Caco-2 (cell line): ENCODE measurements at regions of chr3 and their contacts with region 1.

Region 1: DNA sequence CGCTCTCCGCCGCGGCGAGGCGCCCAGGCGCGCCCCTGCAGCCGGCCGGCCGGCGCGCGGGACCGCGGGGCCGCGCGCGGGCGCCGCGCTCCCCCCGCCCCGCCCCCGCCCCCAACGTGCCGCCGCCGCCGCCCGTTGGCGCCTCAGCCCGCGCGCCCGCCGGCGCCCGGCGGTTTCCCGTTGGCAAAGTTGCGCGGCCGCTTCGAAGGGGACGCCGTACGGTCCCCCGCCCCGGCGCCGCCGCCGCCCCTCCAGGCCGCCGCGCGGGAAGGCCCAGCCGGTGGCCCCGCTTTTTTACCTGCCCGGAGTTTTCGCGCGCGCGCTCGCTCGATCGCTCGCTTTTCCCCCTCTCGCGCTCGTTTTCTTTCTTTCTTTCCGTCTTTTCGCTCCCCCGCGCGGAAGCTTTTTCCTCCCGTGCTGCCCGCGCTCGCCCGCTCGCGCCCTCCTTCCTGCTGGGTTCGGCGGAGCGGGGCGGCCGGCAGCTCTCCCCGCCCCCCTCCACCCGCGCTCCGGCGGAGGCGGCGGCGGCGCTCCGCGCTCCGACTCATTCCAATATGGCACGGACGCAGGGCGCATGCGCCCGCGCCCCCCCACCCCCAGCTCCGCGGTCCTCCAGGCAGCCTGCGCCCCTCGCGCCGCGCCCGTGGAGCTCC is at the start of gene SFMBT1:
- DNase-seq: peak; percentile 69 to 76
- H3K4me3 ChIP-seq: peak within 1 kb of the TSS; percentile 69
- H3K4me3 Mint-ChIP-seq: peak within 1 kb of the TSS; percentile 94
- H3K27ac Mint-ChIP-seq: peak within 1 kb of the TSS; percentile 91
- H3K4me1 ChIP-seq: peaks cover 29% of the 10 kb centered on the region
- H3K4me1 Mint-ChIP-seq: peaks cover 7% of the 10 kb centered on the region
- H3K27me3 ChIP-seq: no peaks in the 10 kb centered on the region
- H3K27me3 Mint-ChIP-seq: no peaks in the 10 kb centered on the region
- CTCF ChIP-seq: no peak
- total RNA-seq, gene SFMBT1: 45.3 and 47.4 TPM in 2 replicates

Region 2: DNA sequence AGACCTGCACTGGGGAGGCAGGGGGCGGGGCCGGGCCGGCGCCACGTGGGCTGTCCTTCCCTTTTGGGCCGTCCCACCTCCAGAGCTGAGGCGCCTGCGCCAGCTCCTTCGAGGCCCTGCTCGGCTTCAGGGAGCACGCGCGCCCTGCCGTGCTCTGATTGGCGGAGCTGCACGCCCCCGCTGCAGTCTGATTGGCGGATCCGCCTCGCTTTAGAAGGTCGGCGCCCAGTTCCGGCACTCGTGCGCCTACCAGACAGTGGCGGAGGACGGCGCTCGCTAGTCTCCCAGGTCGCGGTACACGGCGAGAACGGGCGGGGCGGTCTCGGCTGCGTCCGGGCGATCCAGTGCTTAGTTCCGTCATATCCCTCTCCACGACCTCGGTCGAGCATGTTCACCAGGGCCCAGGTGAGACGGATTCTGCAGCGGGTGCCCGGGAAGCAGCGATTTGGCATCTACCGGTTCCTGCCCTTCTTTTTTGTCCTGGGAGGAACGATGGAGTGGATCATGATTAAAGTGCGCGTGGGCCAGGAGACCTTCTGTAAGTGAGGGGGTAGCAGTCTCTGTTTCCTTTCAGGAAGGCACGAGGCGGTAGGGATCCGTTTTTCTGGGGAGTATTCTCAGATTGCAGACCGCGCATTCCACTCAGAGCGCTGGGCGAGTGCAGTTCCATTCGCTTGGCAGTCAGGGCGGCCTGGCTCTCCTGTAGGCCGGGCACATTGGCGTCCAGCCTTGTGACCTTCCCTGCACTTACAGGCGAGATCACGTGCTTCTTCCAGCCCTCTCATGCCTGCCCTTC is 509.1 kb before region 1 on chr3 and contains the start of gene UQCC5:
- CTCF ChIA-PET with region 1: no interaction called
- POLR2A ChIA-PET with region 1: interaction called, 5 read pairs
- intact Hi-C with region 1: loop called (anchors 10 kb)
- DNase-seq: peak; percentile 98
- H3K4me3 ChIP-seq: peak within 1 kb of the TSS; percentile 82
- H3K4me3 Mint-ChIP-seq: peak within 1 kb of the TSS; percentile 98
- H3K27ac Mint-ChIP-seq: peak within 1 kb of the TSS; percentile 97
- H3K4me1 ChIP-seq: peaks cover 28% of the 10 kb centered on the region; the same call in 1 of the 2 replicates
- H3K4me1 Mint-ChIP-seq: peaks cover 32% of the 10 kb centered on the region
- H3K27me3 ChIP-seq: no peaks in the 10 kb centered on the region
- H3K27me3 Mint-ChIP-seq: no peaks in the 10 kb centered on the region
- CTCF ChIP-seq: no peak
- total RNA-seq, gene UQCC5: 35.0 and 38.6 TPM in 2 replicates

Region 3: GRCh38 chr3:52649461-52650210 is 396.0 kb before region 1 on chr3:
- CTCF ChIA-PET with region 1: no interaction called
- POLR2A ChIA-PET with region 1: no interaction called
- intact Hi-C with region 1: no loop called
- DNase-seq: no peak
- H3K4me3 ChIP-seq: no peak overlapping the region
- H3K4me3 Mint-ChIP-seq: no peak overlapping the region
- H3K27ac Mint-ChIP-seq: no peak overlapping the region
- H3K4me1 ChIP-seq: no peaks in the 10 kb centered on the region
- H3K4me1 Mint-ChIP-seq: peaks cover 7% of the 10 kb centered on the region
- H3K27me3 ChIP-seq: no peaks in the 10 kb centered on the region
- H3K27me3 Mint-ChIP-seq: no peaks in the 10 kb centered on the region
- CTCF ChIP-seq: no peak

Region 4: DNA sequence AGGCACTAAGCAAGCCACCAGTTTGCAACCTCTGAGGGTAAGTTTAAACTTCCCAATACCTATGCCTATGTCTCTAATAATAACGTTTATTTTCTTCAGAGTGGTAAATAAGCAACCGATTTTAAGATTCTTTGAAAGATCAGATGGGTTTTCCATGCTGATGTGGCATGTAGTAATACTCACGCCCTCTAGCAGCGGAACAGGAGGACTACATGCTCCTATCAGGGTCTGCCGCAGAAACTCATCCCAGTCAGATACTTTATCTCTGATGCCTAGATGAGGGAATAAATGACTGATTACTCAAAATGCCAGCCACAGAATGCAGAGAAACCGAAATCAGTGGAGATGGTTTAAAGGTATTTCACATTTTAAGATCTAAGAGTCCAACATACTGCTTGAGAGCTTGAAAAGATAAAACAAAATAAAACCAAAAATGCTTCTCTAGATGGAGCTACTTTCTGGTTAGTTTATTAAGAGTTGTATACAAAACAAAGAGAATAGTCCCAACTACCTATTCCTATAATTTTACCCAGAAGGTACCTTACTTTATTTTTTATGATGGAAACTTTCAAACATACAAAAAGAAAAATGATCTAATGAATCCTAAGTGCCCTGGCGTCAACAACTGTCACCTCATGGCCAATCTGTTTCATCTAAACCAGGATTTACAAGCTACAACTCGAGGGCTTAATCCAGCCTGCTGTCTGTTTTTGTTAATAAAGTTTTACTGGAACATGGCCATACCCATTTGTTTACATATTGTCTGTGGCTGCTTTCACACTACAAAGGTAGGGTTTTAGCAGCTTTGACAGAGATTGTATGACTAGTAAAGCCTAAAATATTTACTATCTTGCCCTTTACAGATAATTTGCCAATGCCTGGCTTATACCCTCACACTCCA is 110.8 kb before region 1 on chr3:
- CTCF ChIA-PET with region 1: no interaction called
- POLR2A ChIA-PET with region 1: no interaction called
- intact Hi-C with region 1: loop called (anchors 5 kb)
- DNase-seq: peak; percentile 51 to 52
- H3K4me3 ChIP-seq: no peak overlapping the region
- H3K4me3 Mint-ChIP-seq: no peak overlapping the region
- H3K27ac Mint-ChIP-seq: no peak overlapping the region
- H3K4me1 ChIP-seq: no peaks in the 10 kb centered on the region
- H3K4me1 Mint-ChIP-seq: no peaks in the 10 kb centered on the region
- H3K27me3 ChIP-seq: no peaks in the 10 kb centered on the region
- H3K27me3 Mint-ChIP-seq: no peaks in the 10 kb centered on the region
- CTCF ChIP-seq: peak; percentile 69 to 87

Region 5: DNA sequence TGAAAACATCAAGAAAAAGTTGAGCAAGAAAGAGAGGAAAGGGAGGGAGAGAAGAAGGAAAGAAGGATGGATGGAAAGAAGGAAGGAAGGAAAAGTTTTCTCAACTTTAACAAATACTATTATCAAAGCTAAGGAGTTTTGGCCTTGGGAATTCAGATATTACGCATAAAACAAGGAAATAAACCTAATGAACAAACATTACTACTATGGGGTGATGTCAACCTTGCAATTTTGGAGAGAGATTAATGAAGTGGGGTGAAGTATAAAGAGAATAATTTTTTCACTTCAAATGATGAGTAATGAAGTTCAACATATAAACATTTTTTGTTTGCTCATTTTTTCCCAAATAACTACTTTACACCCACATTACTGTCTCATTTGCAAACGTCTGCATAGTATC is 55.0 kb before region 1 on chr3:
- CTCF ChIA-PET with region 1: no interaction called
- POLR2A ChIA-PET with region 1: no interaction called
- intact Hi-C with region 1: loop called (anchors 5 kb)
- DNase-seq: no peak
- H3K4me3 ChIP-seq: no peak overlapping the region
- H3K4me3 Mint-ChIP-seq: no peak overlapping the region
- H3K27ac Mint-ChIP-seq: no peak overlapping the region
- H3K4me1 ChIP-seq: no peaks in the 10 kb centered on the region
- H3K4me1 Mint-ChIP-seq: no peaks in the 10 kb centered on the region
- H3K27me3 ChIP-seq: no peaks in the 10 kb centered on the region
- H3K27me3 Mint-ChIP-seq: no peaks in the 10 kb centered on the region
- CTCF ChIP-seq: no peak

Region 6: DNA sequence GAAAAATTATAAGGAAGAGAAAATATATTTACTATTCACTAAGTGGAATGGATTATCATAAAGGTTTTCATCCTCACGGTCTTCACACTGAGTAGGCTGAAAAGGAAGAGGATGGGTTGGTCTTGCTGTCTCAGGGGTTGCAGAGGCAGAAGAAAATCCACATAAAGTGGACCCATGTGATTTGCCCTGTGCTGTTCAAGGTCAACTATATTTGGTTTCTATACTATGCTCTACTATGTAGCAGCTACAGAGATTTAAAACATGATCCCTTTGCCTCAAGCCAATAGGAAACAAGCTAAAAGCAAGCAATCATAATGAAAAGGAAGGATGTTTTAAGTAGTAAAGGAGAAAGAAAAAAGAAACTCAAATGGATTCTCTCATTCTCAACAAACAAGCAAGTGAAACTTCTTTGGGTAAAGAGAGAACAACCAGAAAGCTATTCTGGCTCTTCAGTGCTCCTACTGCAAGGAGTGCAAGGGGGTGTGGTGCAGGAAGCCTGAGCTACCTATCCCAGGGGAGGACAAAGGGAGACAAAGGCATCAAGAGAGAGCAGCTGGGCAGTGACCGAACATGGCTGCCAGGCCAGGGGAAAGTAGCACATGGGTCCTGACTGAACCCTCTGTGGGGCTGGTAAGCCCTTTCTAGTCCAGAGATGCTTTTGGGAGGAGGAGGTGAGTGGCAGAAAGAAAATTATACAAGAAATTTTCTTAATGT is 35.7 kb before region 1 on chr3:
- CTCF ChIA-PET with region 1: interaction called, 3 read pairs
- POLR2A ChIA-PET with region 1: interaction called, 6 read pairs
- intact Hi-C with region 1: loop called (anchors 5 kb)
- DNase-seq: no peak
- H3K4me3 ChIP-seq: no peak overlapping the region
- H3K4me3 Mint-ChIP-seq: no peak overlapping the region
- H3K27ac Mint-ChIP-seq: peak overlapping the region; percentile 7
- H3K4me1 ChIP-seq: peaks cover 13% of the 10 kb centered on the region; the same call in 1 of the 2 replicates
- H3K4me1 Mint-ChIP-seq: peaks cover 27% of the 10 kb centered on the region
- H3K27me3 ChIP-seq: no peaks in the 10 kb centered on the region
- H3K27me3 Mint-ChIP-seq: no peaks in the 10 kb centered on the region
- CTCF ChIP-seq: no peak

Region 7: GRCh38 chr3:53026382-53027162 is 19.1 kb before region 1 on chr3:
- CTCF ChIA-PET with region 1: interaction called, 8 read pairs
- POLR2A ChIA-PET with region 1: interaction called, 11 read pairs
- intact Hi-C with region 1: loop called (anchors 2 kb)
- DNase-seq: peak in 1 of 2 experiments; percentile 39
- H3K4me3 ChIP-seq: no peak overlapping the region
- H3K4me3 Mint-ChIP-seq: no peak overlapping the region
- H3K27ac Mint-ChIP-seq: peak overlapping the region; percentile 25
- H3K4me1 ChIP-seq: peaks cover 34% of the 10 kb centered on the region
- H3K4me1 Mint-ChIP-seq: peaks cover 29% of the 10 kb centered on the region
- H3K27me3 ChIP-seq: no peaks in the 10 kb centered on the region
- H3K27me3 Mint-ChIP-seq: no peaks in the 10 kb centered on the region
- CTCF ChIP-seq: peak in 1 of 2 experiments; percentile 3

Region 8: DNA sequence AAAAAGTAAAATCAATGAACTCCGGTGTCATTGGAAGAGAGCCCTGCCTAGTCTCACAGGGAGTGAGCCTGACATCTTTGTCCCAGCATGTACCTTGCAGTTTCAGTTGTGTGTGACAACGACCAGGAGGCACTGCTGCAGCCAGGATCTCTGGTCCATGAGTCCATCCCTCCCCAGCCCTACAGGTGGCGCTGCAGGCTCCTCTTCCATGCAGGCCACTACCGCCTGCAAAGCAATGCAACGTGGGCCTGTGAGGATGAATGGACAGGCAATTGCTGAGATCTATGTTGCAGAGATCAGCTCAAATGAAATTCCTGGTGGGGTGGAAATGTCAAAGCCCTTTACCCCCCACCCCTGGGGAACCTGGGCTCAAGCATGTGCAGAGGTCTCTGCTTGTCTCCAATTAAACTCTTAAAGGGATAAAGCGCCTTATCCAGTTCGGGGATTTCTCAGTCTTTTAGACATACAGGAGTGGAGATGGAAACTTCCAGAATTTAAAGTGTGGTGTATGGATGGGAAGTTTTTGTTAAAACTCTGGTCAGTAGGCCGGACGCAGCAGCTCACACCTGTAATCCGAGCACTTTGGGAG is 174.3 kb after region 1 on chr3:
- CTCF ChIA-PET with region 1: interaction called, 10 read pairs
- POLR2A ChIA-PET with region 1: no interaction called
- intact Hi-C with region 1: no loop called
- DNase-seq: peak; percentile 87 to 92
- H3K4me3 ChIP-seq: no peak overlapping the region
- H3K4me3 Mint-ChIP-seq: no peak overlapping the region
- H3K27ac Mint-ChIP-seq: no peak overlapping the region
- H3K4me1 ChIP-seq: no peaks in the 10 kb centered on the region
- H3K4me1 Mint-ChIP-seq: no peaks in the 10 kb centered on the region
- H3K27me3 ChIP-seq: no peaks in the 10 kb centered on the region
- H3K27me3 Mint-ChIP-seq: peaks cover 2% of the 10 kb centered on the region
- CTCF ChIP-seq: peak; percentile 85 to 91